T-cell (primary cell): ENCODE measurements at regions of chr2 and their contacts with region 1.

Region 1: DNA sequence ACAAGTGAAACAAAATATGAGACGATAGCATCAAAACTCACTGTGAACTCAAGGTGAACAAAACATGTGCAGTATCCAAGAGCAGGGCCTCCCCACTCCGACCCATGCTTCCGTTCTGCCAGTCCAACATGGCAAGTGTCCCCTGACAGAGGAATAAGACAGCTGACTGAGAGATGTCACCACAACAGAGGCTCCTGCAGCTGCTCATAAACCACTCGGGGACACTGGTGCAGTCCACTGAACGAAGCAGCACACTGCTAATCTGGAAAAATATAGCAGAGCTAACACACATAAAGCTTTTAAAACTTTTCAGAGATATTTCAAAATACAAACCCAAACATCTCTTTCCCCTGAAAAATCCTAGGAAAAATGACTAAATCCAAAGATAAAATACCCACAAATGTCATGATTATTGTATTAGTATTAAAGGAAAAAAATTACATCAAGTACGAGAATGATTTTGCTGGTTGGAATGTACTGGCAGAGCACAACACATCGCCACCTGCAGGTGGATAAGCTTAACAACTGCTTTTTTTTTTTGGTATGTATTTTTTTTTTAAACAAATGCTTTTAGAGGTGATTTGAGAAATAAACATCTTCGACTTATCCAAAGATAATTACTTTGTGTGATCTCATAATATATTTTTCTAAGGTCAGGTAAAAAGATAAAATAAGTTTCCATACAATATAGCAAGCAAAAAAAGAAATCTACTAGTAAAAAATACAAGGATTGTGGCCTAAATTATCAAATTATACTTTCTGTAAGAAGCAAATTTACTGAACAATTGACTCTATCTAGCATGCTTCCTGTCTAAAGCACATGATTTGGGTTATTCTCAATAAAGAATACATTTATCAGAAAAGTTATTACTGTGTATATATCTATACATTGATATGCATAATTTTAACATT is 18.6 kb downstream of the THADA start:
- DNase-seq: peak in 20 of 35 experiments; percentile 5 to 73 (median 17)
- ATAC-seq: no peak
- H3K4me3 ChIP-seq: no peak overlapping the region
- H3K4me3 Mint-ChIP-seq: no peak overlapping the region
- H3K27ac ChIP-seq: no peak overlapping the region
- H3K27ac Mint-ChIP-seq: no peak overlapping the region
- H3K4me1 ChIP-seq: no peaks in the 10 kb centered on the region
- H3K4me1 Mint-ChIP-seq: peaks cover 3 to 14% (median 6%) of the 10 kb centered on the region in 3 donors
- H3K27me3 ChIP-seq: no peaks in the 10 kb centered on the region
- H3K27me3 Mint-ChIP-seq: no peaks in the 10 kb centered on the region

Region 2: GRCh38 chr2:42864222-42864621 is 713.0 kb before region 1 on chr2:
- CTCF ChIA-PET with region 1: interaction called, 4 to 10 read pairs
- POLR2A ChIA-PET with region 1: no interaction called
- DNase-seq: no peak
- ATAC-seq: no peak
- H3K4me3 ChIP-seq: no peak overlapping the region
- H3K4me3 Mint-ChIP-seq: no peak overlapping the region
- H3K27ac ChIP-seq: no peak overlapping the region
- H3K27ac Mint-ChIP-seq: no peak overlapping the region
- H3K4me1 ChIP-seq: no peaks in the 10 kb centered on the region
- H3K4me1 Mint-ChIP-seq: no peaks in the 10 kb centered on the region
- H3K27me3 ChIP-seq: no peaks in the 10 kb centered on the region
- H3K27me3 Mint-ChIP-seq: peaks cover 4% of the 10 kb centered on the region in 2 donors

Region 3: GRCh38 chr2:42944779-42945415 is 632.3 kb before region 1 on chr2:
- CTCF ChIA-PET with region 1: interaction called, 6 to 16 read pairs
- POLR2A ChIA-PET with region 1: no interaction called
- DNase-seq: no peak
- ATAC-seq: no peak
- H3K4me3 ChIP-seq: no peak overlapping the region
- H3K4me3 Mint-ChIP-seq: no peak overlapping the region
- H3K27ac ChIP-seq: no peak overlapping the region
- H3K27ac Mint-ChIP-seq: no peak overlapping the region
- H3K4me1 ChIP-seq: no peaks in the 10 kb centered on the region
- H3K4me1 Mint-ChIP-seq: peaks cover 0 to 5% (median 2%) of the 10 kb centered on the region in 3 donors
- H3K27me3 ChIP-seq: peaks cover 0 to 12% of the 10 kb centered on the region in 2 experiments
- H3K27me3 Mint-ChIP-seq: no peaks in the 10 kb centered on the region

Region 4: DNA sequence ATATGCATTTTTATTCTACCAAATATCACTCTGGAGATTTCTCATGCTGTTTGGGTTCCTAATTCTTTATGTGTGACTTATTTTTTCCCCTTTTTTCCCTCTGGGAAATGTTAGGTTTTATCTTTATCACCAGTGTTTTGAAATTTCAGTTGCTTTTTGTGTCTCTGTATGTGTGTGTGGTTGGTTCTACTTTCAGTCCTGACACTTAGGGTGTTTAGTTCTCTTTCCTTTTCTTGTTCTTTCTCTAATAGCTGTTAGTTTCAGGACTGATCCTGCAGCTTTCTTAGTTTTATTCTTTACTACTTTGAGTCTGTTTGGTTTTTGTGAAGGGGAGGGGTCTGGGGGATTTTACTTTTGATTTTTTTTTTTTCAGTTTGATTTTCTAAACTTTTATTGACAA is 614.5 kb after region 1 on chr2:
- CTCF ChIA-PET with region 1: interaction called in 1 of 2 experiments, 14 read pairs
- POLR2A ChIA-PET with region 1: no interaction called
- DNase-seq: no peak
- ATAC-seq: no peak
- H3K4me3 ChIP-seq: no peak overlapping the region
- H3K4me3 Mint-ChIP-seq: peak overlapping the region in 2 of 3 donors; percentile 0
- H3K27ac ChIP-seq: no peak overlapping the region
- H3K27ac Mint-ChIP-seq: peak overlapping the region in 1 of 2 donors; percentile 72
- H3K4me1 ChIP-seq: peaks cover 4 to 31% of the 10 kb centered on the region in 2 experiments
- H3K4me1 Mint-ChIP-seq: peaks cover 73 to 84% (median 76%) of the 10 kb centered on the region in 3 donors
- H3K27me3 ChIP-seq: no peaks in the 10 kb centered on the region
- H3K27me3 Mint-ChIP-seq: no peaks in the 10 kb centered on the region